Activated T-helper 2 cell treated with anti-CD3 and anti-CD28 coated beads, Interferon-gamma antibody, Interleukin-2, Interleukin-4, amounts not matched to agents 10 μg/mL and 5 μg/mL and 100 μg/mL, durations not matched to agents 14 hours and 24 hours and 36 hours (primary cell): ENCODE measurements at regions of chr4 and their contacts with region 1.

Region 1: GRCh38 chr4:168514249-168514852 is 17.5 kb downstream of the PALLD start:
- DNase-seq: no peak
- H3K4me3 Mint-ChIP-seq: no peak overlapping the region
- H3K27ac Mint-ChIP-seq: no peak overlapping the region
- H3K4me1 Mint-ChIP-seq: peaks cover 25% of the 10 kb centered on the region
- H3K27me3 Mint-ChIP-seq: peaks cover 28% of the 10 kb centered on the region

Region 2: GRCh38 chr4:168480931-168481611 is 33.3 kb before region 1 on chr4:
- intact Hi-C with region 1: loop called (anchors 1 kb)
- DNase-seq: peak; percentile 41
- H3K4me3 Mint-ChIP-seq: peak overlapping the region; percentile 91
- H3K27ac Mint-ChIP-seq: peak overlapping the region; percentile 88
- H3K4me1 Mint-ChIP-seq: peaks cover 45% of the 10 kb centered on the region
- H3K27me3 Mint-ChIP-seq: peaks cover 25% of the 10 kb centered on the region

Region 3: DNA sequence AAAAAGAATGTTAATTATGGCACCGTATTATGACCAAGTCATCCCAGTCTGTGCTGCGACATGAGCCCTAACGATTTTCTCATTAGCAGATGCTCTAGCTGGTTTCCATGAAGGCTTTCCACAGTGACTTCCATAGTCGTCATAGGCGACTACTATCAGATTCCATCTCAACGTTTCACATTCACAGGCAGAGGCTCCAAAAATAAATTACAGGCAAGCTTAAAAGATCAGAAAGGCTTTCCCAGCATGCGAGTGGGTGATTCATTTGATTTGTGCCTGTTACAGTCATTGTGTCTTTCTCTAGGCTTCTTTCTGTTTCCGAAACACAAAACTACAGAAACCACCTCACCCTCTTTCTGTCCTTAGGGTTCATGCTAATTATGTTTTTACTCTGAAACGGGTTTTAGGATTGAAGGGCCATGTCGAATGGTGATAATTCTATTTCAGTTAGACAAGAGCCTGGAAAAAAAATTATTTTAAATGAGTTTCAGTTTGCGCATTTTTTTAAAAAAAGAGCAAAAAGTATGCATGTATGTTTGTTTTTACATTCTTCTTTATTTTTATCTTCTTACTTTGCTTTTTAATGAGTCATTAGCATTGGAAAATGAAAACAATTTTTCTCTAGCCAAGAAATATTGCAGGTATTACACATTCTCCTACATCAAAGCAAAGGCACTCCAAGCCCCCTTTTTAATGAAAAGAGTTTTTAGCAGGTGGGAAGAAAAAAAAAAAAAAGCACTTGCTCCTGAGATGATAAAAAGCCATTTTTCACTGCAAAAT is 25.9 kb after region 1 on chr4:
- intact Hi-C with region 1: no loop called
- DNase-seq: no peak
- H3K4me3 Mint-ChIP-seq: no peak overlapping the region
- H3K27ac Mint-ChIP-seq: no peak overlapping the region
- H3K4me1 Mint-ChIP-seq: no peaks in the 10 kb centered on the region
- H3K27me3 Mint-ChIP-seq: peaks cover 5% of the 10 kb centered on the region

Region 4: DNA sequence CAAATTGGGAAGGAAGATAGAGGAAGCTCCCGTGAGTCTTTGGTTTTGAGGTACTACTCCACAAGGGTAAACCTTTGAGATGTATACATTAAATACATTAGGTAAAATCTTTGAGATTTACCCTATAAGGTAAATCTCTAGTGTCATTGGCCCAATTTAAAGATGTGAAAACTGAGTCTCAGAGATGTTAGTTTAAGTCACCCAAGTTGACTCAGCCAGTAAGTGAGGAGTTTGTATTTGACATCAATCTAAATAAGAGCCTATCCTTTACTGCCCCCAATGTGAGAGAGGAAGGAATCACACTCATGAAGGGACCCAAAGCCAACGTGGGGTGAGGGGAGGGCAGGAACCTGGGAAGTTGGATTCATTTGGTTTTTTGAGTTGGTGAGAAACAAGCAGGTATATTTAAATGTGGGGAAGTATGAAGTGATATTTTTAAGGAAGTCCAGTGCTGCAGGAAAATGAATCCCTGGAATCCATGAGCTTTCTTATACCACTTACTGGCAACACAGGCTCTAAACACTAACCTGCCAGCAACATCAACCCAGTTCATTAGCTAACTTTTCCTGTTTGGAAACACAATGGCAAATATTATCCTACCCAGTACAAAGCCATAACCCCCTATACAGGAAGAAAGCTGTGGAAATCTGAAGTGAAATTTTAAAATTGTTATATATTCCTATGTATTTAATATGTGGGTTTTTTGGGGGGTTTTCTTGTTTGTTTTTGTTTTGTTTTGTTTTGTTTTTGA is 37.8 kb after region 1 on chr4:
- intact Hi-C with region 1: no loop called
- DNase-seq: no peak
- H3K4me3 Mint-ChIP-seq: no peak overlapping the region
- H3K27ac Mint-ChIP-seq: no peak overlapping the region
- H3K4me1 Mint-ChIP-seq: no peaks in the 10 kb centered on the region
- H3K27me3 Mint-ChIP-seq: peaks cover 10% of the 10 kb centered on the region

Region 5: GRCh38 chr4:168631241-168632162 is 117.2 kb after region 1 on chr4:
- intact Hi-C with region 1: loop called (anchors 10 kb)
- DNase-seq: no peak
- H3K4me3 Mint-ChIP-seq: no peak overlapping the region
- H3K27ac Mint-ChIP-seq: no peak overlapping the region
- H3K4me1 Mint-ChIP-seq: peaks cover 15% of the 10 kb centered on the region
- H3K27me3 Mint-ChIP-seq: peaks cover 70% of the 10 kb centered on the region

Region 6: GRCh38 chr4:169993531-169993930 is 1479.2 kb after region 1 on chr4:
- intact Hi-C with region 1: no loop called
- DNase-seq: no peak
- H3K4me3 Mint-ChIP-seq: no peak overlapping the region
- H3K27ac Mint-ChIP-seq: no peak overlapping the region
- H3K4me1 Mint-ChIP-seq: no peaks in the 10 kb centered on the region
- H3K27me3 Mint-ChIP-seq: peaks cover 2% of the 10 kb centered on the region